ENCODE measurements at regions of chr19 and their contacts with region 1.

Region 1: GRCh38 chr19:58499021-58499927 is 12.5 kb downstream of the SLC27A5 start:
- DNase-seq: peak; percentile 89
- ATAC-seq: peak; percentile 92
- H3K4me3 Mint-ChIP-seq: peak overlapping the region; percentile 92
- H3K27ac Mint-ChIP-seq: peak overlapping the region; percentile 90
- H3K4me1 Mint-ChIP-seq: peaks cover 24% of the 10 kb centered on the region
- H3K27me3 Mint-ChIP-seq: no peaks in the 10 kb centered on the region
- CTCF ChIP-seq: no peak

Region 2: DNA sequence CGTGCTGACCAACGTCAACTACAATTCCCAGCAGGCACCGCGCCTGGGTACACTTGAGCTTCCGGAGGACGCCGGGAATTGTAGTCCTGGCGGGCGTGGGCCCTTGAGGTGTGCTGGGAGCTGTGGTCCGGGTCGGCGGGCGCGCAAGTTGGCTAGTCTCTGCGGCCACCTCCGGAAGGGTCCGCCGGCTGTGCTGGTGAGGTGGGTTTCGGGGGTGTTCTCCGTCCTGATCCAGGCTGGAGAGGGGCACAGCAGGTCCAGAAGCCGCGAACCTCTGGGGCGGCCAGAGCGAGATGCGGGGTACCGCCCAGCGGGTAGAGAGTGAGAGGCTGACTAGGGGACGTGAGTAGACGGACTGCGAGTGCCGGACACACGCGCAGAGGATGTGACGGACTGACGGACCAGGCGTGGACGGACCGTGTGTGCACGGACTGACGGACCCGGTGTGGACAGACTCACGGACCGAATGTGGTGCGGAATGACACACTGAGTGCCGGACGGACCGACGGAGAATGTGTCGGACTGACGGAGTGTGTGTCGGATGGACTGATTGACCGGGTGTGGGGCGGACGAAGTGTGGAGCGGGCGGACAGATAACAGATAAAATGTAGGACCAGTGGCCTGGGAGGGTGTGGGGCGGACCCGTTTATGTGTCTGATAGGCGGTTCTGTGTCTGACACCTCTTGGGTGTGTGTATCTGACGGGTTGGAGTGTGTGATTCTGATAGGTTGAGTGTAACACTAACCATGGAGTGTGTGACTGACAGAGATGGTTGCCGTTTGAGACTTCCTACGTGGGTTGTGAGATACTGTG is 172.2 kb before region 1 on chr19 and contains the start of gene ZSCAN22:
- CTCF ChIA-PET with region 1: no interaction called
- POLR2A ChIA-PET with region 1: interaction called, 4 read pairs
- intact Hi-C with region 1: loop called (anchors 1 kb)
- DNase-seq: peak; percentile 82
- ATAC-seq: peak; percentile 88
- H3K4me3 Mint-ChIP-seq: no peak within 1 kb of the TSS
- H3K27ac Mint-ChIP-seq: no peak within 1 kb of the TSS
- H3K4me1 Mint-ChIP-seq: peaks cover 2% of the 10 kb centered on the region
- H3K27me3 Mint-ChIP-seq: no peaks in the 10 kb centered on the region
- CTCF ChIP-seq: no peak
- total RNA-seq, gene ZSCAN22: 4.7 and 4.8 TPM in 2 replicates

Region 3: DNA sequence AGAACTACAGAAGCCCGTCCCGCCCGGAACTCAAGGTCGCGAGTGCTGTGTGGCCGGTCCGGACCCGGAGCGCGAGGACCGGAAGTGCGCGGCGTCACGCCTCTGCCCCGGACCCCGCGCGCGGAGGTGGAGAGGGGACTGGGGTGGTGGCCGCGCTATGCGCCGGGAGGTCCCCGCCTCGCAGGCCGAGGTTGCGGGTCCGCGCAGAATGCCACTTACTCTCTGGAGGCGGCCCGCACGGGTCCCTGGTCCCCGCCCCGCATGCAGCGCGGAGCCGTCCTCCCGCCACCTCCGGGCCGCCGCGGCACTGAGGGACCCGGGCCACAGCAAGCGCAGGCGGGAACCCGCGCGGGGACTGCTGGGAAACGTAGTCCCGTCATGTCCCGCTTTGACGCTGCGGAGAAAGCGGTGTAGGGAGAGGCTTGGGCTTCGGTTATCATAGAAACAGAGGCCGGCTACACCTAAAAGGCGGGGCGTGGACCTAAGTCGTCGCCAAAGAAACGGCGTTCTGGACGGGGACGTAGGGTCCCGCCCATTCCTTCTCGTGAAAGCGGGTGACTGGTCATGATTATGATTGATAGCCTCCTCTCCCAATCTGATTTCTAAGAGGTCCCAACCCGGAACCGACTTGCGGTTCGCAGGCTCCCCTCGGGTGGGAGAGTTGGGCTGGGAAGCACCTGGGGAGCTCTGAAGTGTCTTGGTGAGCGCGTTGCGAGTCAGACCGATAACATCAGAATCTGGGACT is 118.4 kb before region 1 on chr19 and contains the start of gene ZNF837:
- CTCF ChIA-PET with region 1: no interaction called
- POLR2A ChIA-PET with region 1: interaction called, 4 read pairs
- intact Hi-C with region 1: loop called (anchors 1 kb)
- DNase-seq: peak; percentile 96
- ATAC-seq: peak; percentile 86
- H3K4me3 Mint-ChIP-seq: peak within 1 kb of the TSS; percentile 83
- H3K27ac Mint-ChIP-seq: peak within 1 kb of the TSS; percentile 87
- H3K4me1 Mint-ChIP-seq: peaks cover 37% of the 10 kb centered on the region
- H3K27me3 Mint-ChIP-seq: no peaks in the 10 kb centered on the region
- CTCF ChIP-seq: no peak
- total RNA-seq, gene ZNF837: 3.1 and 3.5 TPM in 2 replicates

Region 4: DNA sequence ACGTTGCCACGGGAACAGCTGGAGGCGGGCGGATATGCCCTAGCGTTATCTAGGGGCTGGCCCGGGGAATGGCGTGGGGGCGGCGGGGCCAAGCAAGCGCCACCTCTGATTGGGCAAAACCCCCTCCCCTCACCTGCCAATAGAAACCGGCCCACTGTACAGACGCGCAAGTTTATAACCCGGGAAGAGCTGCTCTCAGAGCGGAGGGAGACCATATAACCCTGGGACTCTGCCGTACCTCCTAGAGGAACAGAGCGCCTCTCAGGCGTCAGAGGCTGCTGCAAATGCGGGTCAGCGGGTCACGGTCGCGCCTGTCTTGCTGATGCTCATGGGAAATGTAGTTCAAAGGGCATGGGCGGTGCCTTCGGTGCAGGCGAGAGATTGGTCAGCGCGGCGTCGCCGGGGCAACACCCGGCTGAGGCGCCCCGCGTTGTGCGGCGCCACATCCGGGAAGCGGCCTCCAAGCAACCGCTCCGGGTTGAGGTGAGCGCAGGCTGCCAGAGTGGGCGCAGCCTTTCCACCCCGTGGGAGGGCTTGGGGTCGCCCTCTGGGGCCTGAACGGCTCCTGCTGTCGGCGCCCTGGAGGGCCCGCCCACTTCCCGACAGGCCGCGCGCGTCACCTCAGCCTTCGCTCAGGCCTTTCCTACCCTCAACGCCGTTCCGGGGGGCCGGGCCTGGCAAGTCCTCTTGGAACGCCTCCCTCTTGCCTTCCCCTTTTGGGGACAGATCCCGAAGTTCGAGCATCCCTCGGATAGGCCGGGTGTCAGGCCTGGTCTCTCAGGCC is 23.4 kb before region 1 on chr19 and contains the start of gene ZNF446:
- CTCF ChIA-PET with region 1: no interaction called
- POLR2A ChIA-PET with region 1: interaction called, 4 read pairs
- intact Hi-C with region 1: loop called (anchors 1 kb)
- DNase-seq: peak; percentile 91
- ATAC-seq: peak; percentile 88
- H3K4me3 Mint-ChIP-seq: peak within 1 kb of the TSS; percentile 94
- H3K27ac Mint-ChIP-seq: peak within 1 kb of the TSS; percentile 95
- H3K4me1 Mint-ChIP-seq: peaks cover 20% of the 10 kb centered on the region
- H3K27me3 Mint-ChIP-seq: no peaks in the 10 kb centered on the region
- CTCF ChIP-seq: no peak
- total RNA-seq, gene ZNF446: 9.6 and 10.4 TPM in 2 replicates

Region 5: DNA sequence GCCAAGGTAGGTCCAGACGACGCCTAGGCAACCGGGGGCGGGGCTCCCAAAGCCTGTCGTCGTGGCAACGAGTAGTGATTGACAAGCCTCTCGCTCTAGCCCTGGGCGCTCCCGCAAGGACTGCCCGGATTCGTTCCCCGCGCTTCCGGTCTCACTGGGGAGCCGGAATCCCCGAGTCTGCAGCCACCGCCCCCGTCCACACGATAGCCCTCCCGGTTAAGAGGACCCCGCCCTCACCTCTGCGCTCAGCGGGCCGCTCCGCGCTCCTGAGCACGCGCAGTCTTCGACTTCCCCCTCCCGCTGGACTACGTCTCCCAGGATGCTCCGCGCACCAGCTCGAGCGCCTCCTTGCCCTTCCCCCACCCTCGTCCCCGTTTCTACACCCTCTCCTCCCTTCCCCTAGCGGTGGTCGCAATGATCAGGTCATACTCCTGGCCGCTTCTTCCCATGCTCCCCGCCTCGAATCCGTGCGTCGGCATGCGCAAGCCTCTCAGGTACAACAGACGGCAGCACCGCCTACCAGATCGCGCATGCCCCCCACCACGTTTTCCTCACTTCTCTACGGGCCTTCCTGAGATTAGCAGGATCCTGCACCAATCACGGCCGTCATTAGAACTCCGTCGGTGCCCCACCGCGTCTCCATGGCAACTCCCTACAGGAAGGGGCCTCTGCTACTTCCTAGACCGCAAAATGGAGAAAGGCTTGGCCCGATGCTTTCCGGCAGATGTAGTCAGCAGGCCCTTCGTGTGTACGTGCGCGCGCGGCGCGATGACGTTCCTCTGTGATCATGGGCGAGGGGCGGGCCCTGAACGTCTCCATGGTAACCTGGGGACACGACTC is 73.8 kb after region 1 on chr19 and contains the start of gene MZF1:
- CTCF ChIA-PET with region 1: no interaction called
- POLR2A ChIA-PET with region 1: interaction called, 12 read pairs
- intact Hi-C with region 1: loop called (anchors 1 kb)
- DNase-seq: peak; percentile 100
- ATAC-seq: peak; percentile 61
- H3K4me3 Mint-ChIP-seq: peak within 1 kb of the TSS; percentile 97
- H3K27ac Mint-ChIP-seq: peak within 1 kb of the TSS; percentile 100
- H3K4me1 Mint-ChIP-seq: peaks cover 44% of the 10 kb centered on the region
- H3K27me3 Mint-ChIP-seq: no peaks in the 10 kb centered on the region
- CTCF ChIP-seq: no peak
- total RNA-seq, gene MZF1: 41.9 and 54.5 TPM in 2 replicates